ENCODE measurements at regions of chr7 and their contacts with region 1.

Region 1: GRCh38 chr7:147539685-147540084 is 1050.9 kb upstream of the C7orf33 start:
- DNase-seq: no peak
- H3K4me3 Mint-ChIP-seq: no peak overlapping the region
- H3K27ac Mint-ChIP-seq: no peak overlapping the region
- H3K4me1 Mint-ChIP-seq: no peaks in the 10 kb centered on the region
- H3K27me3 Mint-ChIP-seq: no peaks in the 10 kb centered on the region

Region 2: GRCh38 chr7:147519062-147519461 is 20.6 kb before region 1 on chr7:
- intact Hi-C with region 1: loop called (anchors 2 kb)
- DNase-seq: no peak
- H3K4me3 Mint-ChIP-seq: no peak overlapping the region
- H3K27ac Mint-ChIP-seq: no peak overlapping the region
- H3K4me1 Mint-ChIP-seq: no peaks in the 10 kb centered on the region
- H3K27me3 Mint-ChIP-seq: no peaks in the 10 kb centered on the region

Measured in activated T-helper 1 cell treated with anti-CD3 and anti-CD28 coated beads, Interleukin-12 subunit alpha, Interleukin-12 subunit beta, Interleukin-2, Interleukin-4 antibody, amounts not matched to agents 30 ng/mL and 10 ng/mL and 1 ng/mL, durations not matched to agents 14 hours and 24 hours and 36 hours (primary cell).